ENCODE measurements at regions of chr4 and their contacts with region 1.

Region 1: DNA sequence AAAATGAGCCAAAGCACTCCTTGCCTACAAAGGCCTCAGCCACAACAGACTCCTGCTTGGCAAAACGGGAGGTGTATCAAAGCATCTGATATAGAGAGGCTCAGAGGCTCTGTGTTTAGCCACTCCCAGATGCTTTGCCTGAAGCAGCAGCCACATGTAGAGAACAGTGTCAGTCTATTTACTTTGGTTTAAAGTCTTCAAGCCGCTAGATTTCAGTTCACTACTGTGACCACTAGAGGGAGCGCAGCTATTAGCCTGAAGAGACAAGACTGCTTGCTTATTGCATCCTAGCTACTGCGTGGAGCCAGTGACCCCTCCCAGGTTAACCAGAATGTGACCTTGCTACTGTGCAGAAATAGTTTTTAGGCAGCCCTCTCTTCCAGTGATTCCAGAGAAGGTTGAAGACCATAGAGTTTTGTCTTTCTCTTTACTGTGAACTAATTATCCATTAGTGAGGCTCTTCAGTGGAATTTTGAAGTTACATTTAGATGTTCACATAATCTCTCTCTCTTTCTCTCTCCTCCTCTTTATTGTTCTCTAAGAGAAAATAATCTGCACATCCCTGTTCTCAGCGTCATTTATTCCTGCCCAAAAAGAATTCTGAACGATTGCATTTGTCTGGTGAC is 39.3 kb downstream of the BMP3 start:
- DNase-seq: peak; percentile 47 to 81 (median 56)
- ATAC-seq: peak; percentile 97
- H3K4me3 ChIP-seq: no peak overlapping the region
- H3K27ac ChIP-seq: no peak overlapping the region
- H3K4me1 ChIP-seq: no peaks in the 10 kb centered on the region
- H3K27me3 ChIP-seq: no peaks in the 10 kb centered on the region
- CTCF ChIP-seq: peak; percentile 79 to 88 (median 80)
- EP300 ChIP-seq: no peak
- POLR2A ChIP-seq: no peak
- RAD21 ChIP-seq: peak; percentile 69 to 80

Region 2: DNA sequence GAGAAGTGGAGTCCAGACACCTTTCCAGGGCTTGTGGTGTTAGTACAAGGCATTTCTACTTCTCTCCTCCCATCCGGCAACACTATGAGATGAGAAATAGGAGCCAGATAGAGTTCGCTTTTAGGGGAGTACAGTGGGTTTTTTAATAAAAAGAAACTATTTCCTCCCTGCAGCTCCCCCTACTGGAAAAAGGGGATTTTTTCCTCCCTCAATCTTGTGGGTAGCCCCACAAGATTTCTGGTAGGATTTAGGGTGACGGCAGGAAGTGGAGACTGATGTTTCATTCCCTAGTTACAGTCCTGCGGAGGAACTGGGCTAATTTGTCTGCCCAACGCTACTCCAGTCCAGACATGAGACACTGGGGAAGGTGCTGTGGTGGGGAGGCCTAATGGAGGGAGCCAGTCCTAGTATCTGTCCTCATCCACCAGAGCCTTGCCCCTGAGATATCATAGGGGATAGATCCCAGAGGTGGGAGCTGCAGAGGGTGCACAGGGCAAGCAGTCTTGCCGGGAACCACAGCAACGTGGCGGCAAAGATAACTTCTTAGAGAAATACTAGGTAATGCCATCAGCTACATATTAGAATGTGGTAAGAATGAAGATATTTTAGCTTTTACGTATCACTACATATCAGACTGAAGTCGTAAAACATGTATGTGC is 190.8 kb after region 1 on chr4:
- CTCF ChIA-PET with region 1: no interaction called
- POLR2A ChIA-PET with region 1: no interaction called
- in situ Hi-C with region 1: no loop called
- intact Hi-C with region 1: loop called (anchors 1 kb)
- DNase-seq: peak; percentile 6 to 14 (median 11)
- ATAC-seq: peak; percentile 69
- H3K4me3 ChIP-seq: no peak overlapping the region
- H3K27ac ChIP-seq: no peak overlapping the region
- H3K4me1 ChIP-seq: no peaks in the 10 kb centered on the region; a peak in 1 of 5 replicates
- H3K27me3 ChIP-seq: no peaks in the 10 kb centered on the region
- CTCF ChIP-seq: peak; percentile 35 to 62 (median 59); a peak in 5 of 6 replicates
- EP300 ChIP-seq: no peak
- POLR2A ChIP-seq: no peak
- RAD21 ChIP-seq: peak in 1 of 2 experiments; percentile 22; a peak in 2 of 4 replicates

Region 3: GRCh38 chr4:81351654-81352445 is 282.0 kb after region 1 on chr4:
- CTCF ChIA-PET with region 1: interaction called, 14 read pairs
- POLR2A ChIA-PET with region 1: no interaction called
- in situ Hi-C with region 1: loop called (anchors 25 kb)
- intact Hi-C with region 1: loop called (anchors 1 kb)
- DNase-seq: peak; percentile 37 to 79 (median 60)
- ATAC-seq: peak; percentile 93
- H3K4me3 ChIP-seq: no peak overlapping the region
- H3K27ac ChIP-seq: no peak overlapping the region
- H3K4me1 ChIP-seq: no peaks in the 10 kb centered on the region
- H3K27me3 ChIP-seq: no peaks in the 10 kb centered on the region
- CTCF ChIP-seq: peak; percentile 74 to 80 (median 79)
- EP300 ChIP-seq: no peak
- POLR2A ChIP-seq: no peak
- RAD21 ChIP-seq: peak; percentile 58 to 64

Measured in K562 (cell line).